Lower leg skin (tissue), 4 donors: ENCODE measurements at regions of chr2 and their contacts with region 1.

Region 1: GRCh38 chr2:197378494-197379307 is 56.1 kb downstream of the SF3B1 start:
- DNase-seq: peak in 1 of 2 donors; percentile 29
- H3K4me3 ChIP-seq: no peak overlapping the region
- CTCF ChIP-seq: no peak
- POLR2A ChIP-seq: no peak

Region 2: GRCh38 chr2:197028230-197028629 is 350.5 kb before region 1 on chr2:
- intact Hi-C with region 1: no loop called
- DNase-seq: no peak
- H3K4me3 ChIP-seq: no peak overlapping the region
- CTCF ChIP-seq: no peak
- POLR2A ChIP-seq: no peak

Region 3: DNA sequence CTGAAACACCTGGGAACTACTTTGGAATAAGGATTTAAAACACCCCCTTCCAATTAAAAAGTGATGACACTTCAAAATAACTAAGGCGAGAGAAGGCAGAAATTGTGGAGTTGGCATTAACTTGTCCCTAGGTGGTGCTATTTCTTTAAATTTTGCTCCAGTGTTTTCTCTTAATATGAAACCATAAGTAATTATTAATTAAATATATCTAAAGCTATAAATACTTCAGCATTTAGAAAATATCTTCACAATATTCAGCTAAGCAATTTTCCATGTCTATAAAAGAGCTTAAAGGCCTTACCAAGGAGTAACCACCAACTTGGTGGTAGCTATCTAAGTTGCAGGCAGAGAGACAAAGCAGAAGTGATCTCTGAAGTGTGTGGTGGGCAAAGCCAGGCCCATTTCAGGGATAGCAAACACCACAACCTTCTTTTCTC is 265.4 kb before region 1 on chr2:
- intact Hi-C with region 1: loop called (anchors 5 kb)
- DNase-seq: no peak
- H3K4me3 ChIP-seq: no peak overlapping the region
- CTCF ChIP-seq: no peak
- POLR2A ChIP-seq: no peak

Region 4: GRCh38 chr2:197191177-197191939 is 187.3 kb before region 1 on chr2:
- intact Hi-C with region 1: loop called (anchors 10 kb)
- DNase-seq: no peak
- H3K4me3 ChIP-seq: no peak overlapping the region
- CTCF ChIP-seq: no peak
- POLR2A ChIP-seq: no peak